ENCODE measurements at regions of chr15 and their contacts with region 1.

Region 1: GRCh38 chr15:45402162-45402954 is 24.0 kb upstream of the GATM start:
- DNase-seq: peak; percentile 94
- H3K4me3 ChIP-seq: peak overlapping the region; percentile 88 to 94
- H3K27ac ChIP-seq: peak overlapping the region; percentile 82 to 92
- H3K4me1 ChIP-seq: no peaks in the 10 kb centered on the region
- H3K27me3 ChIP-seq: no peaks in the 10 kb centered on the region
- CTCF ChIP-seq: peak in 1 of 4 experiments; percentile 12
- POLR2A ChIP-seq: peak; percentile 77

Region 2: DNA sequence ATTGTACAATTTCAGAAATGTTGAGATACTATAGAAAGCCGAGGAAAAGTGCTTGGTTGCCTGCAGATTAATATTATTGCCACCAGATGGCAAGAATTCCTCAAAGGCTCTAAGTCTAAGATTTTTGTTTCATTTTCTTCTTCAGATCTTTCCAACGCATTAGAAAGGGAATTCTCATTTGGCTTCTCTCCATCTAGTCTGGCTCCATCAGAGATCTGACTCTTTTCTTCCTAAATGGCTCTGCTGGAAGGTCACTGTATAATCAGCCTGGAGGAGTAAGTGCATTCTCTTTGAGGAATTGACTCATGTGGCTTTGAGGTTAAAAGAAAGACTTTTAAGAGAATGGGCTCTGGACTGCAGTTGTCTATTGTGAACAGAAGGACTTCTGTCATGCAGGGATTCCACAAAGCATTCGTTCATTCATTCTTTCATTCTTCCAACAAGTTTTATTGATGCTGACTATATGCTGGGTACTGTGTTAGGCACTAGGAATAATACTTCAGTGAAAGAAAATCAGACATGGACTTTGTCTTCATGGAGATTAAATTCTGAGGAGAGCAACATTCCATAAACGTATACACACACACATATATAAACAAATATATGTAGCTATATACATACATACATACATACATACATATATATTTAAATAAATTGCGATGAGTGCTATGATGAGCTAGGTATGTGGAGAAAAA is 95.0 kb before region 1 on chr15:
- intact Hi-C with region 1: loop called (anchors 2 kb)
- DNase-seq: peak; percentile 8
- H3K4me3 ChIP-seq: no peak overlapping the region
- H3K27ac ChIP-seq: no peak overlapping the region
- H3K4me1 ChIP-seq: no peaks in the 10 kb centered on the region
- H3K27me3 ChIP-seq: no peaks in the 10 kb centered on the region
- CTCF ChIP-seq: peak in 3 of 4 experiments; percentile 57 to 84 (median 80)
- POLR2A ChIP-seq: no peak

Region 3: DNA sequence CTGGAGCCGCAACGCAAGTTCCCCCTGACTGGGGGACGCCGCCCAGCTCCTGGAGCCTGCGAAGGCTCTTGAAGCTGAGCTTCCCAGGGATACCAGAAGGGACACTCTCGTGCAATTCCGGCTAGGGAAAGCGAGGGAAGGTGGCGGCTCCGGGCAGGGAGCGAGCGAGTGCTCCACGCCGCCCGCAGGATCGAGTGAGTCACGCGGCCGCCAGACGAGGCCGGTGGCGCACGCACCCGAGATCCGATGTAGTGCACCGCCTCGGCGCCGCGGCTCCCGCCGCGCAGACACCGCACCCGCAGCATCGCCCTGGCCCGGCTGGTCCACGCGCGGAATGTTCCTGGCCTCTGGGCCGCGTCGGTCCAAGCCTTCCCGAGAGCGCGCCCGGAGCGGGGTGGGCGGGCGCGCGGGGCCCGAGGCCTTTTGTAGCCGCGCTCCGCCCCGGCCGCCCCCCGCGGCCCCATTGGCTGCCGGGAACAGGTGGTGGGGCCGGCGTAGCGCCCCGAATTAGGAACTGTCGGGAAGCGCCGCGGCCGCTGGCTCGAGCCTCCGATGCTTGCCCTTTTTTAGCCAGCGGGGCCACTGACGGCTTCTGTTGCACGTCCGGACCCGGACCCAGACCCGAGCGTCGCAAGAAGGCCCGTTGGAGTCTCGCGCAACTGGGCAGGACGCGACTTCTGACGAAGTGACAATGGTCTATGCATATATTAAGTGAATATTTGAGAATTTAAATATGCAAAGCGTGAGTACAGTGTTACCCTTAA is 24.0 kb before region 1 on chr15 and contains the start of gene GATM:
- intact Hi-C with region 1: loop called (anchors 2 kb)
- DNase-seq: peak; percentile 58
- H3K4me3 ChIP-seq: peak within 1 kb of the TSS; percentile 43 to 45
- H3K27ac ChIP-seq: peak within 1 kb of the TSS; percentile 48 to 69
- H3K4me1 ChIP-seq: no peaks in the 10 kb centered on the region
- H3K27me3 ChIP-seq: no peaks in the 10 kb centered on the region
- CTCF ChIP-seq: peak in 2 of 4 experiments; percentile 35 to 47
- POLR2A ChIP-seq: no peak
- total RNA-seq, gene GATM: 12.9 to 254 TPM

Region 4: GRCh38 chr15:45587095-45587860 is 184.9 kb after region 1 on chr15 and contains the start of gene BLOC1S6:
- intact Hi-C with region 1: loop called (anchors 5 kb)
- DNase-seq: peak; percentile 81
- H3K4me3 ChIP-seq: peak within 1 kb of the TSS; percentile 91 to 95
- H3K27ac ChIP-seq: peak within 1 kb of the TSS; percentile 98 to 99
- H3K4me1 ChIP-seq: no peaks in the 10 kb centered on the region
- H3K27me3 ChIP-seq: no peaks in the 10 kb centered on the region
- CTCF ChIP-seq: no peak
- POLR2A ChIP-seq: peak; percentile 52
- total RNA-seq, gene BLOC1S6: 46.0 to 82.5 TPM

Measured in prostate gland (tissue), 2 donors.